Naive thymus-derived CD4-positive, alpha-beta T cell (primary cell): ENCODE measurements at regions of chr22 and their contacts with region 1.

Region 1: GRCh38 chr22:30386960-30387827 is at the start of gene RNF215:
- DNase-seq: peak; percentile 55 to 92 (median 82)
- ATAC-seq: peak; percentile 97
- H3K4me3 ChIP-seq: no peak within 1 kb of the TSS
- H3K4me3 Mint-ChIP-seq: peak within 1 kb of the TSS; percentile 54 to 83 (median 78)
- H3K27ac ChIP-seq: peak within 1 kb of the TSS; percentile 26
- H3K27ac Mint-ChIP-seq: peak within 1 kb of the TSS in 6 of 9 donors; percentile 41 to 86 (median 70)
- H3K4me1 ChIP-seq: peaks cover 3 to 10% of the 10 kb centered on the region in 2 donors
- H3K4me1 Mint-ChIP-seq: peaks cover 16 to 22% (median 20%) of the 10 kb centered on the region in 7 donors
- H3K27me3 ChIP-seq: no peaks in the 10 kb centered on the region
- H3K27me3 Mint-ChIP-seq: peaks cover 0 to 4% (median 0%) of the 10 kb centered on the region in 5 donors
- total RNA-seq, gene RNF215: 4.3 to 10.8 (median 5.3) TPM

Region 2: DNA sequence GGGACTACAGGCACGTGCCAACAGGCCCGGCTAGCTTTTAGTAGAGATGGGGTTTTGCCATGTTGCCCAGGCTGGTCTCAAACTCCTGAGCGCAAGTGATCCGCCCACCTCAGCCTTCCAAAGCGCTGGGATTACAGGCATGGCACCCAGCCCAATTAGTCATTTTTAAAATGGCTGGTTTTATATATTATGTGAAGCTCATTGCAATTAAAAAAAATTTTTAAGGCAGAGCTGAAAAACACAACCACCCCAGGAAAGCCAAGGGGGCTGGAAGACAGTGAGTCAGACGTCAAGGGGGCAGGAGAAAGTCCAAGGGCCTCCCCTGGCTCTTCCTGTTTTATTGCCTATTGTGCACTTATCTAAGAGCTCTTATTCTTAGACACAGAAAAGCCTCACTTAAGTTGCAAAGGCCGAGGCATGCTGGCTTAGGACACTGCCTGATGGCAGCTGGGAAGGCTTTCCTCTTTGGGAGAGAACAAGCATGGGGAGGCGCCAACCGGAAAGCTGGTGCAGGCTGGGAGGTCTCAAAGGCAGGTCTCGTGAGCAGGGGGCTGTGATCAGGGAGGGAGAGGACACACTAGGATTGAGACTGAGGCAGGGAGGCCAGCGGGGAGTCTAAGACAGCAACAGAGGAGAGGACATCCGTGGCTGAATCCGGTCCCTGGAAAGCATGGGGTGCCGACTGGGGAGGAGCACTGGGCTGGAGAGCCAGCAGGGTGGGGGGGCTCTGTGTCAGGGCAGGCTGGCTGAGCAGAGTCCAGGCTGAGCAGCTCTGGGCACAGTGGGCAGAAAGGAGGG is 109.4 kb before region 1 on chr22:
- CTCF ChIA-PET with region 1: interaction called, 11 read pairs
- POLR2A ChIA-PET with region 1: no interaction called
- intact Hi-C with region 1: no loop called
- DNase-seq: no peak
- ATAC-seq: no peak
- H3K4me3 ChIP-seq: no peak overlapping the region
- H3K4me3 Mint-ChIP-seq: peak overlapping the region in 1 of 10 donors; percentile 53
- H3K27ac ChIP-seq: no peak overlapping the region
- H3K27ac Mint-ChIP-seq: peak overlapping the region in 2 of 9 donors; percentile 43 to 56
- H3K4me1 ChIP-seq: peaks cover 5 to 20% of the 10 kb centered on the region in 2 donors
- H3K4me1 Mint-ChIP-seq: peaks cover 36 to 71% (median 42%) of the 10 kb centered on the region in 7 donors
- H3K27me3 ChIP-seq: no peaks in the 10 kb centered on the region
- H3K27me3 Mint-ChIP-seq: no peaks in the 10 kb centered on the region

Region 3: DNA sequence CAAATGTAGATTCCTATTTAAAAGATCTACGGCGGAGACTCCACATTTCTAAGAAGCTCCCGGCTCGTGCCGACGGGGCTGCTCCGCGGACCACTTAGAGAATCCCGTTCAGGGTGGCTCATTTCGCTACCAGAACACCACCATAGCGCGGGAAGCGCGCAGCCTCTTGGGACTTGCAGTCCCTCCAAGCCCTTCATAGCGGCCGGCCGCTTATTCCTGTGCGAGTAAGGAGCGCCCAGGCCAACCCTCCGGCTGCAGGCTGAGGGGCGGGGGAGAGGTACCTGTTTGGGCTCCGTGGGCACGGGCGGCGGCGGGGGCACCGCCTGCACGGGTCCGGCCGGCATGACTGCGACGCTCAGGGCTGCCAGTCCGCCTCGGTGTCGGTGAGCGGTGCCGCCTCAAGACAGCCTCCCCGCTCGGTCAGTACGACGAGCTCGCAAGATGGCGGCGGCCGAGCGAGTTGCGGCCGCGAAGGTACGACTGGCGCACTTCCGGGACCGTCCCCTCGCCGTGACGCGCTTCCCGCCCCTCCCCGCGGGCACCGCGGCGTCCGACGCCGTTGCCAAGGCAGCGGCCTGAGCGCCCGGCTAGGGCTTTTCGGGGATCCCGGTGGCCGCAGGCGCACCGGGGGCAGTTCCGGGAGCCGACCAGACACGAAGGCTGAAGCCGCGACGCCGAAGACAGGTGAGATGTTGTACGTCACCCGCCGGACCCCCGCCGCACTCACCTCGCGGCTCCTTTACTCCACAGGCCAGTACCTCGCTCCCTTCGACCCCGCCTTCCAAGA is 30.6 kb before region 1 on chr22 and contains the starts of genes CCDC157 and SF3A1:
- CTCF ChIA-PET with region 1: interaction called, 7 read pairs
- POLR2A ChIA-PET with region 1: interaction called, 5 read pairs
- intact Hi-C with region 1: loop called (anchors 1 kb)
- DNase-seq: peak; percentile 78 to 90 (median 86)
- ATAC-seq: peak; percentile 94
- H3K4me3 ChIP-seq: peak within 1 kb of the TSS; percentile 94
- H3K4me3 Mint-ChIP-seq: peak within 1 kb of the TSS; percentile 92 to 99 (median 95)
- H3K27ac ChIP-seq: peak within 1 kb of the TSS; percentile 100
- H3K27ac Mint-ChIP-seq: peak within 1 kb of the TSS; percentile 86 to 99 (median 95)
- H3K4me1 ChIP-seq: peaks cover 32 to 37% of the 10 kb centered on the region in 2 donors
- H3K4me1 Mint-ChIP-seq: peaks cover 35 to 62% (median 54%) of the 10 kb centered on the region in 7 donors
- H3K27me3 ChIP-seq: no peaks in the 10 kb centered on the region
- H3K27me3 Mint-ChIP-seq: peaks cover 0 to 6% (median 0%) of the 10 kb centered on the region in 5 donors
- total RNA-seq, gene CCDC157: 1.8 to 6.9 (median 3.2) TPM
- total RNA-seq, gene SF3A1: 267 to 341 (median 284) TPM

Region 4: GRCh38 chr22:30485362-30485988 is 98.3 kb after region 1 on chr22:
- CTCF ChIA-PET with region 1: interaction called, 57 read pairs
- POLR2A ChIA-PET with region 1: interaction called, 4 read pairs
- intact Hi-C with region 1: loop called (anchors 1 kb)
- DNase-seq: peak; percentile 61 to 84 (median 70)
- ATAC-seq: peak; percentile 98
- H3K4me3 ChIP-seq: no peak overlapping the region
- H3K4me3 Mint-ChIP-seq: no peak overlapping the region
- H3K27ac ChIP-seq: no peak overlapping the region
- H3K27ac Mint-ChIP-seq: peak overlapping the region in 3 of 9 donors; percentile 2 to 45 (median 9)
- H3K4me1 ChIP-seq: no peaks in the 10 kb centered on the region
- H3K4me1 Mint-ChIP-seq: peaks cover 0 to 2% (median 0%) of the 10 kb centered on the region in 7 donors
- H3K27me3 ChIP-seq: no peaks in the 10 kb centered on the region
- H3K27me3 Mint-ChIP-seq: peaks cover 0 to 4% (median 0%) of the 10 kb centered on the region in 5 donors

Region 5: DNA sequence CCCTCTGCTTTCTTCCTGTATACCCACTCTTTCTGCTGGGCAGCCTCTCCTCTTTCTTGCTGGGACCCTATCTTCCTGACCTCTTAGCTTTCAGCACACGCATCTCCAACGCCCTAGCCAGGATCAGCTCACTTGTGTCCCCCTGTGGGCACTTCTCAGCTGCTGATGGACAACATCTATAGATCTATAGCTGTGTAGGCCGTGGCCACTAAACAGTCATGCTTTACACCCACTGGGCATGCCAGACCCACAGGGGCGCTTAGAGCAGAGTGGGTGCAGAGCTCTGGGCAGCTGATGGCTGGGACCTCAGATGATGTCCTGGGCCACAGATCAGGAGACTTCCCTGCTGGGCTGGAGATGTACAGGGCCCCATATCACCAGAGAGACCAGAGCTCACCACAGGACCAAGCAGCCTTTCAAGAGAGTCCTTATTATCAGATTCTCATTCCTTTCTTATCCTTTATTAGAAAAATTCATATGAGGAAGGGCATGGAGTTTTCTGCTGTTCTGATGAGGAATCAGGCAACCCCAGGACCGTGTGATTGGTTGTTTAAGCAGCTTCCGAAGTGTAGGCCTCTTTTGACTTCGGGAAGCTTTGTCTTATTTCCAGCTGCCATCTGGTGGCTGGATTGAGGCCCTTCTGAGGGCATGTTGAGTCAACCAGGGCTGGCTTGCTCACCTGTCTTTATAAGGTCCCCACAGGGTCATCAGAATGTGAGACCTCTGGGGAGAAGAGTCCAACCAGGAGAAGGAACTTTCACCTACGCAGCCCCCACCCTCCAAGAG is 368.0 kb after region 1 on chr22:
- CTCF ChIA-PET with region 1: interaction called, 3 read pairs
- POLR2A ChIA-PET with region 1: no interaction called
- intact Hi-C with region 1: loop called in 1 of 2 experiments (anchors 10 kb)
- DNase-seq: peak in 8 of 9 donors; percentile 12 to 44 (median 30)
- ATAC-seq: peak; percentile 67
- H3K4me3 ChIP-seq: no peak overlapping the region
- H3K4me3 Mint-ChIP-seq: no peak overlapping the region
- H3K27ac ChIP-seq: no peak overlapping the region
- H3K27ac Mint-ChIP-seq: no peak overlapping the region
- H3K4me1 ChIP-seq: no peaks in the 10 kb centered on the region
- H3K4me1 Mint-ChIP-seq: peaks cover 0 to 3% (median 0%) of the 10 kb centered on the region in 7 donors
- H3K27me3 ChIP-seq: no peaks in the 10 kb centered on the region
- H3K27me3 Mint-ChIP-seq: peaks cover 0 to 4% (median 0%) of the 10 kb centered on the region in 5 donors